Activated T-helper 2 cell treated with anti-CD3 and anti-CD28 coated beads, Interferon-gamma antibody, Interleukin-2, Interleukin-4, amounts not matched to agents 10 μg/mL and 5 μg/mL and 100 μg/mL, durations not matched to agents 14 hours and 24 hours and 36 hours (primary cell): ENCODE measurements at regions of chr4 and their contacts with region 1.

Region 1: DNA sequence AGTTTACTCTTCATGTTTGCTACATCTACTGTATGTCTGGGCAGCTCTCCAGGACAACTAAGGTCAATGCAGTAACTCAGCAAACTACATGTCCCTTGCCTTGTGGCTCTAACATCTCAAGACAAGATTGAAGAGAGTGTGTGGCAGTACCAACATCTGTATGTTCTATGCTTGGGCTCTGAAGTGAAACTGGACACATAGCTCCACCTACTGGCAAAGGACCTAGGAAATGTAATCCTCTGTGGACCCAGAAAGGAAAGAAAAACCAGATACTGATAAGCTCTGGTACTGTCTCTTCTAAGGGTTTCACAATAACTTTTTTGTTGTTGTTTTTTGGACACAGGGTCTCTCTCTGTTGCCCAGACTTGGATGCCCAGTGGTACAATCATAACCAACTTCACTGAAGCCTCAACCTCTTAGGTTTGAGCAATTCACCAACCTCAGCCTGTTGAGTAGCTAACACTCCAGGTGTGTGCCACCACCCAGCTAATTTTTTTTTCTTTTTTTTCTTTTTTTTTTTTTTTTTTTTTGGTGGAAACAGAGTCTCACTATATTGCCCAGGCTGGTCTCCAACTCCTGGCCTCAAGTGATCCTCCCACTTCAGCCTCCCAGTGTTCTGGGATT is 64.1 kb downstream of the QDPR start:
- DNase-seq: peak; percentile 26
- H3K4me3 Mint-ChIP-seq: no peak overlapping the region
- H3K27ac Mint-ChIP-seq: no peak overlapping the region
- H3K4me1 Mint-ChIP-seq: peaks cover 6% of the 10 kb centered on the region
- H3K27me3 Mint-ChIP-seq: peaks cover 5% of the 10 kb centered on the region

Region 2: GRCh38 chr4:16794816-16795445 is 652.9 kb before region 1 on chr4:
- intact Hi-C with region 1: loop called (anchors 10 kb)
- DNase-seq: no peak
- H3K4me3 Mint-ChIP-seq: no peak overlapping the region
- H3K27ac Mint-ChIP-seq: no peak overlapping the region
- H3K4me1 Mint-ChIP-seq: no peaks in the 10 kb centered on the region
- H3K27me3 Mint-ChIP-seq: peaks cover 2% of the 10 kb centered on the region

Region 3: GRCh38 chr4:16916719-16917337 is 531.0 kb before region 1 on chr4:
- intact Hi-C with region 1: loop called (anchors 1 kb)
- DNase-seq: peak; percentile 72
- H3K4me3 Mint-ChIP-seq: no peak overlapping the region
- H3K27ac Mint-ChIP-seq: no peak overlapping the region
- H3K4me1 Mint-ChIP-seq: peaks cover 10% of the 10 kb centered on the region
- H3K27me3 Mint-ChIP-seq: peaks cover 2% of the 10 kb centered on the region

Region 4: DNA sequence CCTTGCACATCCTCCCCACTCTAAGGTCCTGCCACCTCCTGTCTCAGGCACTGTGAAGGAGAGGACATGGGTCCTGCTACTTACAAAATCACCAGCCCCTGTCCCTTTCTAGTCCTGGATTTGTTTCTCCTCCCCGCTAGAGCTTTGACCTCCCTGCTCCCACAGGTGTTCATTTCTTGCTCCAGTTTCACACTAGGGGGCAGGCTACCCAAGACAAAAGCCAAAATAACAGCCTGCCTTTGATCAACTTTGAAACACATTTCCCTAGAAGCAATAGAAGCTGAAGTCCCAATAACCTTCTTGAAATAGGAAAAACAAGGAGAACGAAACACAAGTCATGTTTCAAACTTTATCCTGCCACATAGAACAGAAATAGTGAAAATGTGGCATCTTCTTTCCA is 100.3 kb before region 1 on chr4:
- intact Hi-C with region 1: loop called (anchors 1 kb)
- DNase-seq: no peak
- H3K4me3 Mint-ChIP-seq: no peak overlapping the region
- H3K27ac Mint-ChIP-seq: no peak overlapping the region
- H3K4me1 Mint-ChIP-seq: no peaks in the 10 kb centered on the region
- H3K27me3 Mint-ChIP-seq: no peaks in the 10 kb centered on the region